IMR-90 (cell line): ENCODE measurements at regions of chr3 and their contacts with region 1.

Region 1: DNA sequence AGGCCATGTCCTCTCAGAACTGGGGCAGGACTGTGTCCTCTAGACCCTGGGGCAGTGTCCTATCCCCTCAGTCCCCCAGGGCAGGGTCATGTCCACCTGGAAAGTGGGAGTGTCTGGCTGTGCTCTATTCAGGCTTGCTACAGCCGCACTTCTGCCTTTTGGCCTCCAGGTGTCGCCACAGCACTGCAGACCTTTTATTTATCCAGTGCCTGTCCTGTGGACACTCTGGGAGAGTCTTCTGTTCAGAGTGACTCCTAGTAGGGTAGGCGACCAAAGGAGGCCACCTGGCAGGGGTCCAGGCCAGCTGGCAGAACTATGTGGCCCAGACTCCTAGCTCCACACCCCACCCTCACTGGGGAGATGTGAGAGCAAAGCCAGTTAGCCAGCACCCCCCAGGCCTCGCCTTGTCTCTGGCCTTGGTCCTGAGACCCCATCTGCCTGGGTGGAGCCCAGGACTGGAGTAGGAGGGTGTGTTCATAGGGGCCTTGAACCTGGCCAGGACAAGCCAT is 3.9 kb downstream of the TMIE start:
- DNase-seq: peak; percentile 59
- ATAC-seq: peak; percentile 91
- H3K4me3 ChIP-seq: no peak overlapping the region
- H3K27ac ChIP-seq: no peak overlapping the region
- H3K4me1 ChIP-seq: peaks cover 9% of the 10 kb centered on the region; the same call in 1 of the 2 replicates
- H3K27me3 ChIP-seq: peaks cover 31% of the 10 kb centered on the region
- CTCF ChIP-seq: peak; percentile 93
- POLR2A ChIP-seq: 0 out of 2 replicates have a peak, but pooled peaks have one; percentile 32
- RAD21 ChIP-seq: peak; percentile 94

Region 2: GRCh38 chr3:46895204-46895660 is 190.2 kb after region 1 on chr3:
- CTCF ChIA-PET with region 1: interaction called, 6 read pairs
- POLR2A ChIA-PET with region 1: no interaction called
- dilution Hi-C with region 1: no loop called
- in situ Hi-C with region 1: loop called (anchors 5 kb)
- intact Hi-C with region 1: loop called (anchors 1 kb)
- DNase-seq: peak; percentile 34
- ATAC-seq: peak; percentile 52
- H3K4me3 ChIP-seq: no peak overlapping the region
- H3K27ac ChIP-seq: no peak overlapping the region
- H3K4me1 ChIP-seq: no peaks in the 10 kb centered on the region; the same call in 1 of the 2 replicates
- H3K27me3 ChIP-seq: peaks cover 29% of the 10 kb centered on the region
- CTCF ChIP-seq: peak; percentile 81
- POLR2A ChIP-seq: no peak
- RAD21 ChIP-seq: peak; percentile 80

Region 3: DNA sequence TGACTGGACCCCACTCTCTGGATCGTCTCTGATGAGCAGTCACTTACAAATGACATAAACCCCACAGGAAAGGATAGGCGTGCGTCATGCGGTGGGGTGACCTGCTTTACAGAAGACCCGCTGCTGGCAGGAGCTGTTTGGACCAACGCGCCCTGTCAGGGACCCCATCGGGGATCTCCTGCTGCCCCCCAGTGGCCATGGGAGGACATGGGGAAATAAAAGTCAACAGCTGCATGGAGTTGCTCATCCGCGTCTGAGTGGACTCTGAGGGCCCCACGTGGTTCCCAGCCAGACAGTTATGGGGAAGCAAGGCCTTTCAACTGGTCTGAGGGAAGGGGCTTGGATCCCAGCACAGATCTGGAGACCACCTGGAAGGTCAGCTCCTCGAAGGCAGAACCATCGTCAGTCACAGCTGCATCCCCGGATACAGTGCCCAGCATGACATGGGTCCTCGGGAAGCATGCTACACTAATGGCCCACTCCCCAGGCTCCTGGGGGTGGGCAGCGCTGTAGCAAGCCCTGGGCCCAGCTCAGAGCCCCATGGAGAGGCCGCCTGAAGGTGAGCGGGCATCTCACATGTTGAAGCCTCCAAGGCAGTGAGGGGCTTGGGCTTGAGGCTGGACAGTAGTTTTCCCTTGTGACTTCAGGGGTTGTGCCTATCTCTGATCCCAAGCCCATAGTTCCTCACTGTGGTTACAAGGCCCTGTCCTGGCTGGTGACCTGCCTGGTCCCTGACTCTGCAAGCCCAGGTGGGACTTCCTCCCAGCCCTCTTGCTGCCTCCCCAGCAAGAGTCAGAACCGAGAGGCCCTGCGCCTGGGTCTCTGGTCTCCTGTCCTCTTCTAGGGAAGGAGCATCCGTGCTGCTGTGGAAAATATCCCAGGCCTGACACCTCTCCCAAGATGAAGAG is 204.7 kb after region 1 on chr3:
- CTCF ChIA-PET with region 1: interaction called, 4 read pairs
- POLR2A ChIA-PET with region 1: no interaction called
- dilution Hi-C with region 1: no loop called
- in situ Hi-C with region 1: no loop called
- intact Hi-C with region 1: loop called (anchors 1 kb)
- DNase-seq: peak; percentile 85
- ATAC-seq: peak; percentile 92
- H3K4me3 ChIP-seq: no peak overlapping the region
- H3K27ac ChIP-seq: no peak overlapping the region
- H3K4me1 ChIP-seq: peaks cover 9% of the 10 kb centered on the region; the same call in 1 of the 2 replicates
- H3K27me3 ChIP-seq: peaks cover 2% of the 10 kb centered on the region; the same call in 1 of the 2 replicates
- CTCF ChIP-seq: peak; percentile 98
- POLR2A ChIP-seq: peak; percentile 51; the same call in 1 of the 2 replicates
- RAD21 ChIP-seq: peak; percentile 90

Region 4: DNA sequence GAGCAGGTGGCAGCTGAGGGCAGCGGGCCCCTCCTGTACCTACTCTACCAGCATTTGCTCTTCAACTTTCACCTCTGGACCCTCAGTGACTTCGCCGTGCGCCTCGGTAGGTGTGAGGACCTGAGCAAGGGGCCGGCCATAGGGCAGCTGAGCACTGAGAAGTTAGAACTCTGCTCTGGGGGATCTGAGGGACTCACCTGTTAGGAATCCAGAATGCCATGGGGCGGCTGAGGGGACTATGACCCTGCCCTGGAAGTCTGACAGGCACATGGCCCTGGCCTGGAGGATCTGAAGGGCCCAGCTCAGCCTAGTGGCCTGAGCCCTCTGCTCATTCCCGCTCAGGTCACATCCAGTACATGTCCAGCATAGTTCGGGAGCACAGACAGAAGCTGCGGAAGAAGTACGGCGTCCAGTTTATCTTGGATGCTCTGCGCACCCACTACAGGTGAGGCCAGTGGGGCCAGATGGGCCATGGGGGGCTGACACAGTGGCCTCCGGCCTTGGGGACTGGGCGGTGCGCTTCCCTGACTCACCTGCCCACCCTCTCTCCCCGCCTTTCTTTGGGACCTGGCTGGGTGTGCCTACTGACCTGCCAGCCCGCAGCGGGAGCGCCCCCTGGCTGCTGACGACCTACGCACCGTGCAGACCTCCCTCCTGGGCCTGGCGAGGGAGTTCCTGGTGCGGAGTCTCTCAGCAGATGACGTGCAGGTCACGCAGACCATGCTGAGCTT is 293.2 kb after region 1 on chr3:
- CTCF ChIA-PET with region 1: no interaction called
- POLR2A ChIA-PET with region 1: no interaction called
- dilution Hi-C with region 1: no loop called
- in situ Hi-C with region 1: no loop called
- intact Hi-C with region 1: loop called (anchors 1 kb)
- DNase-seq: peak; percentile 18
- ATAC-seq: peak; percentile 48; the same call in 1 of the 2 replicates
- H3K4me3 ChIP-seq: no peak overlapping the region
- H3K27ac ChIP-seq: no peak overlapping the region
- H3K4me1 ChIP-seq: peaks cover 5% of the 10 kb centered on the region; the same call in 1 of the 2 replicates
- H3K27me3 ChIP-seq: no peaks in the 10 kb centered on the region
- CTCF ChIP-seq: peak; percentile 63
- POLR2A ChIP-seq: no peak
- RAD21 ChIP-seq: peak; percentile 70

Region 5: GRCh38 chr3:47370887-47371697 is 666.0 kb after region 1 on chr3:
- CTCF ChIA-PET with region 1: no interaction called
- POLR2A ChIA-PET with region 1: no interaction called
- dilution Hi-C with region 1: no loop called
- in situ Hi-C with region 1: loop called (anchors 25 kb)
- intact Hi-C with region 1: loop called (anchors 2 kb)
- DNase-seq: no peak
- ATAC-seq: peak; percentile 70
- H3K4me3 ChIP-seq: no peak overlapping the region
- H3K27ac ChIP-seq: no peak overlapping the region
- H3K4me1 ChIP-seq: no peaks in the 10 kb centered on the region
- H3K27me3 ChIP-seq: no peaks in the 10 kb centered on the region; the same call in none of the 2 replicates
- CTCF ChIP-seq: peak; percentile 37
- POLR2A ChIP-seq: no peak
- RAD21 ChIP-seq: peak; percentile 49